MCF 10A (cell line): ENCODE measurements at regions of chr10 and their contacts with region 1.

Region 1: DNA sequence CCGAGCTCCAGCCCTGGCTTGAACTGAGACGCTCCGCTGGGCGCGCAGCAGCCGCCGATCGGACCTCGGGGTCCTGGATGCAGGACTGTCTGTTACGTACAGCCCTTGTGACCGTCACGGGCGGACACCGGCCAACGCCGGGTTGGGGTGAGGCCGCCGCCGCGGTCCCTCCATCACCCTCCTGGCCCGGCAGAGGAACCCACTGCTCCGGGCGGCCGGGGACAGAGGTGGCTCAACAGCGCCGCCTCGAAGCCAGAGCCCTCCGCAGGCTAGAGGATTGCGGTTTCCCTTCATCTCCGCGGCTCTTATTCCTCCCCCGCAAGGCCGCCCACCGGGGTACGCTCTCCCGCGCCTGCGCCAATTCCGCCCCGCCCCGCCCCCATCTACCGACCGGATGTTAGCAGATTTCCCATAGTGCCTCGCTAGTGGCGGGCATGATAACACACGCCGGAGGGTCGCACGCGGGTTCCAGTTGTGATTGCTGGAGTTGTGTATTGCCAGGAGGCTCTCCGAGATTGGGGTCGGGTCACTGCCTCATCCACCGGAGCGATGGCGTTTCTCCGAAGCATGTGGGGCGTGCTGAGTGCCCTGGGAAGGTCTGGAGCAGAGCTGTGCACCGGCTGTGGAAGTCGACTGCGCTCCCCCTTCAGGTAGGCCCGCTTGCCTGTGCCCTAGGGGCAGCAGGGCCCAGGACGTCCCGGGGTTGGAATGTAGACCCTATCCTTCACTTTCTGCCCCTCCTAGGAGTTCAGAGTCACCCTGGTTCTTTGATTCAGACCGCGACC is at the start of gene TFAM:
- DNase-seq: peak; percentile 93
- H3K4me3 Mint-ChIP-seq: peak within 1 kb of the TSS; percentile 86
- H3K27ac Mint-ChIP-seq: peak within 1 kb of the TSS; percentile 86
- H3K4me1 Mint-ChIP-seq: peaks cover 9% of the 10 kb centered on the region
- H3K27me3 Mint-ChIP-seq: no peaks in the 10 kb centered on the region
- CTCF ChIP-seq: peak; percentile 37
- total RNA-seq, gene TFAM: 44.4 and 62.3 TPM in 2 replicates

Region 2: GRCh38 chr10:58334817-58335305 is 50.3 kb before region 1 on chr10 and contains the start of gene UBE2D1:
- CTCF ChIA-PET with region 1: interaction called, 6 read pairs
- POLR2A ChIA-PET with region 1: interaction called, 50 read pairs
- intact Hi-C with region 1: loop called (anchors 2 kb)
- DNase-seq: peak; percentile 77
- H3K4me3 Mint-ChIP-seq: peak within 1 kb of the TSS; percentile 95
- H3K27ac Mint-ChIP-seq: peak within 1 kb of the TSS; percentile 86
- H3K4me1 Mint-ChIP-seq: peaks cover 13% of the 10 kb centered on the region
- H3K27me3 Mint-ChIP-seq: no peaks in the 10 kb centered on the region
- CTCF ChIP-seq: peak; percentile 7
- total RNA-seq, gene UBE2D1: 12.2 and 14.7 TPM in 2 replicates

Region 3: DNA sequence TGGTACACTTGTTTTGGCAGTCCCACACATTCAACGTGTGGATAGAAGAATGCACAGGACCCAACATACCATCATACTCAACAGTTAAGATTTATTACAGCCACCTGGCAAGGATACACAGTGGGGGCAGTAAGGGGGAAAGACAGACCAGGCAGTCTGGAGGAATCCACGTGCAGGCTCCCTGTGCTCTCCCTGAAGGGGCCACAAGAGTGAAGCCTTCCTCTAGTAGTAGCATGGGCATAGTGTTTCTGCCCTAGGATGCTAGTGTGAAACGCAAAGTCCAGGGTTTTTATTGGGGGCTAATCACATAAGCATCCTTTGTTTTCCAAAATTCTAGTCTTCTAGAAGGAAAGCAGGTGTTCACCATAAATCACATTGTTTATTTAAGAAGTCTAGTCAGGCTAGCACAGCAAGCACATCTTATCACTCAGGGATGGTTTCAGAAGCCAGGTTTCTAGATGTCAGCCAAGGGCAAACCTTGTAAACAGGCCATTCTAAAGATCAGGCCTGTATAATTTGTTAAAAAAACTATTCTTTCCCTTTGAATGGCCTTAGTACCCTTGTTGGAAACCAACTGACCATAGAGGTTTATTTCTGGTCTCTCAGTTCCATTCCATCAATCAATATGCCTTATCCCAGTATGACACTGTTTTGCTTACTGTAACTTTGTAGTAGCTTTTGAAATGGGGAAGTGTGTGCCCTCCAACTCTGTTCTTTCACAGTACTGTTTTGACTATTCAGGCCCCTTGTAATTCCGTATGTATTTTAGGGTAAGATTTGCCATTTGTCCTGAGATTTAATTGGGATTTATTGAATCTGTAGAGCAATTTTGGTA is 12.4 kb before region 1 on chr10:
- CTCF ChIA-PET with region 1: interaction called, 7 read pairs
- POLR2A ChIA-PET with region 1: interaction called, 11 read pairs
- intact Hi-C with region 1: no loop called
- DNase-seq: no peak
- H3K4me3 Mint-ChIP-seq: no peak overlapping the region
- H3K27ac Mint-ChIP-seq: no peak overlapping the region
- H3K4me1 Mint-ChIP-seq: peaks cover 6% of the 10 kb centered on the region
- H3K27me3 Mint-ChIP-seq: no peaks in the 10 kb centered on the region
- CTCF ChIP-seq: no peak